ENCODE measurements at regions of chr10 and their contacts with region 1.

Region 1: GRCh38 chr10:73979809-73980433 is 18.0 kb upstream of the VCL start:
- DNase-seq: no peak
- H3K4me3 ChIP-seq: no peak overlapping the region
- H3K27ac ChIP-seq: no peak overlapping the region
- H3K4me1 ChIP-seq: peaks cover 6% of the 10 kb centered on the region
- H3K27me3 ChIP-seq: no peaks in the 10 kb centered on the region
- CTCF ChIP-seq: no peak

Region 2: DNA sequence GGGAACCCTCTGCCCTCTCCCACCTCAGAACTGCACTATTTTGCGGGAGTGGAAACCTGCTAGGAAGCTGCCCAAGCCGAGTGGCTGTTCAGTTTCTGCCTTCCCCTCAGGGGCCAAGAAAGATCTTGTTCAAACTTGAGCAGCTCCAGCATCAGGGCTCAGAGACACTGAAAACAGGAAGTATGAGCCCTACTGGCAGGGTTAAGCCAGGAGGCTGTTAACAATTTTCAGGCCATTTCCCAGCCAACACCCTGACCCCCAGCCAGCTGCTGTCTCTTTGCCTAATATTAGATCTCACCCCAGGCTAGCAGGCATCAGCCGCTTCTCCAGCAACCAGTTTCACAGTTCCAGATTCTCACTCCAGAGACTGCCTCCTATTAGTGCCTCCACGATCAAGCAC is 59.8 kb before region 1 on chr10:
- CTCF ChIA-PET with region 1: no interaction called
- dilution Hi-C with region 1: loop called (anchors 5 kb)
- in situ Hi-C with region 1: no loop called
- intact Hi-C with region 1: no loop called
- DNase-seq: peak; percentile 95
- H3K4me3 ChIP-seq: no peak overlapping the region
- H3K27ac ChIP-seq: peak overlapping the region; percentile 96
- H3K4me1 ChIP-seq: peaks cover 43% of the 10 kb centered on the region
- H3K27me3 ChIP-seq: no peaks in the 10 kb centered on the region
- CTCF ChIP-seq: peak in 1 of 2 donors; percentile 27

Region 3: GRCh38 chr10:74677951-74678350 is 698.0 kb after region 1 on chr10:
- CTCF ChIA-PET with region 1: no interaction called
- dilution Hi-C with region 1: no loop called
- in situ Hi-C with region 1: no loop called
- intact Hi-C with region 1: no loop called
- DNase-seq: no peak
- H3K4me3 ChIP-seq: no peak overlapping the region
- H3K27ac ChIP-seq: no peak overlapping the region
- H3K4me1 ChIP-seq: no peaks in the 10 kb centered on the region
- H3K27me3 ChIP-seq: no peaks in the 10 kb centered on the region
- CTCF ChIP-seq: no peak

Measured in mammary epithelial cell (primary cell).